ENCODE measurements at regions of chr15 and their contacts with region 1.

Region 1: GRCh38 chr15:79004336-79004735 is 59.5 kb upstream of the CTSH start:
- DNase-seq: peak; percentile 88
- H3K4me3 ChIP-seq: no peak overlapping the region
- H3K27ac ChIP-seq: peak overlapping the region; percentile 46
- H3K4me1 ChIP-seq: peaks cover 17% of the 10 kb centered on the region
- H3K27me3 ChIP-seq: no peaks in the 10 kb centered on the region
- CTCF ChIP-seq: no peak

Region 2: DNA sequence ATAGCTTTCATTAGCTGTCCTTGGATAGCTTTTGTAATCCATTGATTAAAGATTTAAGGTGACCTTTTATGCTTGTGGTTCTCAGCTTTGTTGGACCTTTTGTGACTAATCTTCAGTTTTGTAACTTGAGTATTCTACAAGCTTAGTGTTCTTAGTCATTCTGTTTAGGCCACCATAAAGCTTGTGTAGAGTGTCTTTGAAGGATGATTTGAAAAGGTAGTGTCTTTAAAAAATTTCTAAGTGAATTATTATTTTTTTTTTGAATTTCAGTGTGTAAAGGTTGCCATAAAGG is 124.1 kb before region 1 on chr15:
- CTCF ChIA-PET with region 1: no interaction called
- POLR2A ChIA-PET with region 1: interaction called, 13 read pairs
- intact Hi-C with region 1: no loop called
- DNase-seq: no peak
- H3K4me3 ChIP-seq: no peak overlapping the region
- H3K27ac ChIP-seq: no peak overlapping the region
- H3K4me1 ChIP-seq: peaks cover 42% of the 10 kb centered on the region
- H3K27me3 ChIP-seq: no peaks in the 10 kb centered on the region
- CTCF ChIP-seq: no peak

Measured in A673 (cell line).